Heart left ventricle (tissue), 16 donors: ENCODE measurements at regions of chr1 and their contacts with region 1.

Region 1: GRCh38 chr1:61049850-61050540 is 32.4 kb upstream of the NFIA start:
- DNase-seq: peak; percentile 92 to 96 (median 94)
- ATAC-seq: peak; percentile 79 to 88 (median 85)
- H3K4me3 ChIP-seq: peak overlapping the region; percentile 60 to 95 (median 84)
- H3K27ac ChIP-seq: peak overlapping the region; percentile 89 to 99 (median 98)
- H3K4me1 ChIP-seq: peaks cover 0 to 44% (median 32%) of the 10 kb centered on the region in 12 donors
- H3K27me3 ChIP-seq: peaks cover 0 to 10% (median 0%) of the 10 kb centered on the region in 9 donors
- CTCF ChIP-seq: peak; percentile 94 to 99 (median 98)
- POLR2A ChIP-seq: no peak

Region 2: DNA sequence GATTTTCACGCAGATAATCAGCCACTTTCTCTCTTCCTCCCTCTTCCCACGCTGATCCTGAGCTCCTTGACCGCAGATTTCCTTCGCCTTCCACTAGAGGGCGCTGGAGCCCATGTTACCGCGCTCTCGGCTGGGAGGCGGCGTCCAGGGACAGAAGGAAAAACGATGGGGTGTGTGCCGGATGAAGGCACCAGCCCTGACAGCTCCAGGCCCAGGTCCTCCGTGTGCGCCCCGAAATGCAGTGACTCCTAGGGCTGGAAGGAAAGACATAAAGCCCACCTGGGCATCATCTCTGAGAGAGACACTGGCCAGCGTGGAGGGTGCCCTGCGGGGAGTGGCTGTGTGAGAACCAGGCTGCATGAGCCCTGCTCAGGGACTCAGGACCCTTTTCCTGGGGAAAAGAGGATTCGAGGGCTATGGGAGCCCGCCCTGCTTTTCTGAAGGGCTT is 1078.5 kb before region 1 on chr1:
- intact Hi-C with region 1: loop called in 2 of 10 experiments (anchors 10 kb)
- DNase-seq: peak; percentile 55 to 84 (median 68)
- ATAC-seq: peak; percentile 45 to 92 (median 88)
- H3K4me3 ChIP-seq: no peak overlapping the region
- H3K27ac ChIP-seq: no peak overlapping the region
- H3K4me1 ChIP-seq: peaks cover 0 to 8% (median 3%) of the 10 kb centered on the region in 12 donors
- H3K27me3 ChIP-seq: peaks cover 0 to 9% (median 0%) of the 10 kb centered on the region in 9 donors
- CTCF ChIP-seq: peak; percentile 81 to 93 (median 88)
- POLR2A ChIP-seq: no peak

Region 3: DNA sequence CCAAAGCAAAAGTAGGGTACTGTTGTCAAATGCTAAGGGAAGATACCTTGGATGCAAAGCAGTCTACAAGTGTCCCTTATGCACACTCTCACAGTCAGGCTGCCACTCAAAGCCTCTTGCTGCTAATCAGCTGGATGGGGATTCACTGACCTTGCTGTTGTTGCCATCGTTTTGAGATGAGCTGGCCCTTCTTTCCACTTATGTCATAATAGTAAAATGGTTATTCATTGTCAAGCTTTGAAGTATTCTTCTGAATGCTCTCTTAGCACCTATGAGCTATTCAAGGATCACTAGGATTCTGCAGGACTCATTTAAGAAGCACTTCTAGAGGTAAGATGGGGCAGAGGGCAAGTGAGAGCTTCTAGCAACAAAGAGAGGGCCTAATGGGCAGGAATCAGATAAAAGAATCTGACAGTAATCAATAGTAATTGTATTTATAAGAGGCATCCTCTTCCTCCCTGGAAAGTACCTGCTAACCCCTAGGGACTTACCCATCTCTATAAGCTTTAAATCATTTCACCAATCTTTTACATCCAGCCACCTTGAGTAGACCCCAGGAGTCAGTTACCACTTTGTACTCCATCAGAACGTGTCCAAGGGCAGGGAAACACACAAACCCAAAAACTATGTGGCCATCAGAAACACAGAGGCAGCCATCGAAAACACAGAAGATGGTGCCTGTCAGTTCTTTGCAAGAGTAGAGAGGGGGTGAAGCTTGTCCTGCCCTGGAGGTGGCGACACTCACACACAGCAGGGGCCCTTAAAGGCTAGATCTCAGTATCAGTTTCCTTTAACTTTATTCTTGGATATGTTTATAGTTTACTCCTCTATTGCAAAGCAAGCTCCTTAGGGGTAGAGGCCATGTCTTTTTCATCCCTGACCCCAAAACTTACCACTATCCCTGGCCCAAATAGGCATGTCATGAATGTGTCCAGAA is 71.3 kb before region 1 on chr1:
- intact Hi-C with region 1: loop called in 2 of 10 experiments (anchors 10 kb)
- DNase-seq: no peak
- ATAC-seq: peak in 3 of 4 donors; percentile 47 to 74 (median 54)
- H3K4me3 ChIP-seq: no peak overlapping the region
- H3K27ac ChIP-seq: no peak overlapping the region
- H3K4me1 ChIP-seq: peaks cover 0 to 12% (median 2%) of the 10 kb centered on the region in 12 donors
- H3K27me3 ChIP-seq: no peaks in the 10 kb centered on the region
- CTCF ChIP-seq: peak; percentile 36 to 64 (median 42)
- POLR2A ChIP-seq: no peak

Region 4: DNA sequence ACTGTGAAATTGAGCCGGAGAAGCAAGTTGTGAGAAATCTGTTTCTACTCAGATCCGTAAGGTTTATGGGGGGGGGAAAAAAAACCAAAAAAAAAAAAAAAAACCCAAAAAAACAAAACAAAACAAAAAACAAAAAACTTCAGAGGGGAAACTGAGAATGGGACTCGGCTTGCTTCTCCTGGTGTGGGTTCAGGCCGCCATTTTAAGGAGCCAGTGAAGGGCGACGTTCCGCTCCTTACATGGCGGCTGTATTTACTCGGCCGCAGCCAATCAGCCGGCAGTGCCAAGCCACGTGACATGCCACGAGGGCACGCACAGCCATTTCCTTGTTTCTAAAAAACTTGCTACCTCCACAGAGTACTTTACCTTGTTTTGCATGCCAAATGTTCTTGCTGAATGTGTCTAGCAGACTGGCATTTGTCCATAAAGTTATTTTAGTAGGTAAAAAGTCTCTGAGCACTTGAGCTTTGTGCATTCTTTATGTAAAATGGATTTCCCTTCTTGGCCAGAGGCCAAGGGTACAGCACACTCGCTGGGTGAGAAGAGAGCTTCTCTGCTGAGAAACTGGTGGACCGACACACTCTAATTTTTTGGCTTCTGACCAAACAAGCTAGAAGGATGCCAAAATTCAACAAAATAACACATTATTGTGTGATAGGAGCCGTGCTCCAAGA is 134.2 kb after region 1 on chr1:
- intact Hi-C with region 1: loop called in 6 of 10 experiments (anchors 2 to 10 kb)
- DNase-seq: peak; percentile 92 to 96 (median 93)
- ATAC-seq: peak; percentile 92 to 96 (median 94)
- H3K4me3 ChIP-seq: peak overlapping the region in 11 of 12 donors; percentile 24 to 53 (median 42)
- H3K27ac ChIP-seq: peak overlapping the region; percentile 66 to 94 (median 88)
- H3K4me1 ChIP-seq: peaks cover 23 to 76% (median 58%) of the 10 kb centered on the region in 12 donors
- H3K27me3 ChIP-seq: no peaks in the 10 kb centered on the region
- CTCF ChIP-seq: no peak
- POLR2A ChIP-seq: no peak

Region 5: DNA sequence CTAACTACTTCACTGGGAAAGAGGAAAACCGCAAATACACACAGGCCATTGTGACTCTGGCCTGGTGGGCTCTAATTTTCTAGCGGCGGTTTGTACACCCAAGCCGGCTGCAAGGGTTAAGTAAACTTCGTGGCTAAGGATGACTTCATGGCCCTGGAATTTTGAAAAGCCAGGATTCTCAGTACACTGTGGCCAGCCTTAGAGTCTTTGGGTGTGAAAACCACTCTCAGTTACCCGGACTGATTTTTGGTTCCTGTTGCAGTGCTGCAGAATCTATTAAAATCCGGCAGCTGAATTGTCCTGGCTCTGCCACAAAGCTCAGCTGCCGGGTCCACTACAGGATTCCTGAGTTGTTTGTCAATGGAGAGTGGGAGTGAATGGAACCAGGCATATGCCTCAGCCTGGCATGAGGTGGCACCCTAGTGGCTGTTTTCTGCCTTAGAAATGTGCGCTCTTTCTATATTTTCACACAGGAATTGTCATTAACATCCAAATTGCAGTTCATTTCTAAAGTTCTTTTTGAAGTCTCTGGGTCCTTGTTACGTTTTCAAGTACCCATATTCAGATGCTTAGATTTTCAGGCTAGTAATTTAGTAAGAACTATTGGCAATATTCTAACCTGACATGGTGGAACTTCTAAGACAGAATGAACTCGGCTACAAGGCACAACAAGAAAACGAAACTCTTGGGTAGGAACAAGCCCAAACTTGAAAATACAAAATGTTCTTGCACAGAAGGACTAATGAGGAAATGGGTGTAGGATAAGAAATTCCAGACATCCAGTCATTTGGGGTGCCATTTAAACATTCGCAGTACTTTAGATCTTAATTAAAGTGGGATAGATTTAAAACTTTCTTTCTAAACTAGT is 288.2 kb after region 1 on chr1:
- intact Hi-C with region 1: loop called (anchors 1 to 10 kb)
- DNase-seq: peak in 4 of 5 donors; percentile 62 to 74 (median 72)
- ATAC-seq: peak; percentile 84 to 90 (median 87)
- H3K4me3 ChIP-seq: peak overlapping the region in 9 of 12 donors; percentile 3 to 45 (median 14)
- H3K27ac ChIP-seq: peak overlapping the region; percentile 42 to 86 (median 70)
- H3K4me1 ChIP-seq: peaks cover 2 to 56% (median 35%) of the 10 kb centered on the region in 12 donors
- H3K27me3 ChIP-seq: no peaks in the 10 kb centered on the region
- CTCF ChIP-seq: peak; percentile 48 to 76 (median 66)
- POLR2A ChIP-seq: no peak

Region 6: GRCh38 chr1:61378494-61379180 is 328.6 kb after region 1 on chr1:
- intact Hi-C with region 1: no loop called
- DNase-seq: peak in 1 of 5 donors; percentile 26
- ATAC-seq: peak in 2 of 4 donors; percentile 30 to 39
- H3K4me3 ChIP-seq: no peak overlapping the region
- H3K27ac ChIP-seq: peak overlapping the region in 11 of 12 donors; percentile 3 to 74 (median 33)
- H3K4me1 ChIP-seq: peaks cover 0 to 38% (median 13%) of the 10 kb centered on the region in 12 donors
- H3K27me3 ChIP-seq: no peaks in the 10 kb centered on the region
- CTCF ChIP-seq: no peak
- POLR2A ChIP-seq: no peak

Region 7: GRCh38 chr1:61588736-61589672 is 539.0 kb after region 1 on chr1:
- intact Hi-C with region 1: loop called in 4 of 10 experiments (anchors 5 to 10 kb)
- DNase-seq: peak; percentile 29 to 64 (median 48)
- ATAC-seq: peak; percentile 56 to 85 (median 80)
- H3K4me3 ChIP-seq: no peak overlapping the region
- H3K27ac ChIP-seq: peak overlapping the region in 1 of 12 donors; percentile 24
- H3K4me1 ChIP-seq: peaks cover 0 to 6% (median 0%) of the 10 kb centered on the region in 12 donors
- H3K27me3 ChIP-seq: no peaks in the 10 kb centered on the region
- CTCF ChIP-seq: peak; percentile 56 to 77 (median 66)
- POLR2A ChIP-seq: no peak

Region 8: GRCh38 chr1:61851849-61852669 is 802.1 kb after region 1 on chr1:
- intact Hi-C with region 1: loop called in 7 of 10 experiments (anchors 5 to 10 kb)
- DNase-seq: peak in 1 of 5 donors; percentile 20
- ATAC-seq: peak in 3 of 4 donors; percentile 54 to 77 (median 72)
- H3K4me3 ChIP-seq: no peak overlapping the region
- H3K27ac ChIP-seq: no peak overlapping the region
- H3K4me1 ChIP-seq: peaks cover 0 to 5% (median 0%) of the 10 kb centered on the region in 12 donors
- H3K27me3 ChIP-seq: no peaks in the 10 kb centered on the region
- CTCF ChIP-seq: peak; percentile 53 to 84 (median 76)
- POLR2A ChIP-seq: no peak